ENCODE measurements at regions of chr18 and their contacts with region 1.

Region 1: DNA sequence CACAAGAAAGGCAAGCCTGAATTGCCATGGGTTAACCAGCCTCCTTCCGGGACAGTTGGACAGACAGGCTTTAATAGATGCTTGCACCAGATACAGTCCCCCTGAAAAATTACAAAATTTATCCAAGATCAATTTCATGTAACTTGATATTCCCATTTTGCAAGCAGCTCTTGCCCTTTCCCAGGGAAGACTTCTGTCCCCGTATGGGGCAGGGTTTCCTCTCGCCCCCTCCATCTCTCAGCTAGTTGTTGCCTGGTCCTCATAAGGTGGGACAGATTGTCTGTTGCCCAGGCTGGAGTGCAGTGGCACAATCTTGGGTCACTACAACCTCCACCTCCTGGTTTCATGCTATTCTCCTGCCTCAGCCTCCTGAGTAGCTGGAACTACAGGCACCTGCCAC is 61.2 kb downstream of the TTC39C start:
- DNase-seq: peak; percentile 16
- H3K4me3 Mint-ChIP-seq: peak overlapping the region; percentile 24
- H3K27ac Mint-ChIP-seq: peak overlapping the region; percentile 86
- H3K4me1 Mint-ChIP-seq: peaks cover 19% of the 10 kb centered on the region
- H3K27me3 Mint-ChIP-seq: no peaks in the 10 kb centered on the region
- CTCF ChIP-seq: no peak

Region 2: GRCh38 chr18:24027156-24027827 is 48.4 kb before region 1 on chr18:
- CTCF ChIA-PET with region 1: interaction called, 8 read pairs
- POLR2A ChIA-PET with region 1: interaction called, 4 read pairs
- intact Hi-C with region 1: loop called (anchors 1 kb)
- DNase-seq: peak; percentile 95
- H3K4me3 Mint-ChIP-seq: peak overlapping the region; percentile 57
- H3K27ac Mint-ChIP-seq: peak overlapping the region; percentile 74
- H3K4me1 Mint-ChIP-seq: peaks cover 31% of the 10 kb centered on the region
- H3K27me3 Mint-ChIP-seq: no peaks in the 10 kb centered on the region
- CTCF ChIP-seq: no peak

Region 3: GRCh38 chr18:24086082-24086481 is 10.4 kb after region 1 on chr18:
- CTCF ChIA-PET with region 1: interaction called, 10 read pairs
- POLR2A ChIA-PET with region 1: interaction called, 4 read pairs
- intact Hi-C with region 1: no loop called
- DNase-seq: no peak
- H3K4me3 Mint-ChIP-seq: no peak overlapping the region
- H3K27ac Mint-ChIP-seq: no peak overlapping the region
- H3K4me1 Mint-ChIP-seq: no peaks in the 10 kb centered on the region
- H3K27me3 Mint-ChIP-seq: no peaks in the 10 kb centered on the region
- CTCF ChIP-seq: no peak

Region 4: DNA sequence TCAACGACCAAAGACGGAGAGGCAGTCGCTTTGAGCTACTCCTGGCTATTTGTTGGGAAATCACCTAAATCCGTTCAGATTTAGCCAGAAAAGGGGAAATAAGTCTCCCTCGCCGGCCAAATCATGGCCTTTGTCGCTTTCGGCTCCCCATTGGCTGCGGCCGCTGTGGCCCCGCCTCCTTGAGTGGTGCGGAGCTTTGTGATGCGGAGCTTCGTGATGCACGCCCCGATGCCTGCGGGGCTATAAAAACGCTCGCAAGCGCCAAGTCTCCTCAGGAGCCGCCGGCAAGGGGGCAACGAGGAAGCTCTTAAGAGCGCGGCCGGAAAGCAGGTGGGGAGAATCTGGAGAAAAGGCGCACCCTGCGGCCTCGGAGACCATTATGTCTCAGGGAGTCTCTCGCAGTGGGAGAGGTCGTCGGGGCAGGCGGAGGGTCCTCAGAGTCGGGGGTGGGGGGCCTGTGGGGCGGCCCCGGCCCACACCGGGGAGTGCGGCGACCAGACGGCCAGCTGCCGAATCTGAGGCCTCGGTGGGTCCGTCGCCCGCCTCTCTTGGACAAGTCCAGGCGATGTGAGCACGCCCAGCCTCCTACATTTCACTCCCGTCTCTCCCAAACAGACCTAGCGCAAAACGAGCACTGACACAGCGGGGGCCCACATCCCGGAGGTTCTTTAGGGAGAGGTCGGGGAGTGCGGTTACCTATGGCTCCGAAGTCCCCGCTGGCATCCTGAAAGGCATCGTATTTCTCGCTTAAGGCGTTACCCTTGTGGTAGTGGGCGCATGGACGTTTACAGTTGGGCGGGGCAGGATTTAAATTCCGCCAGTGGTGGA is 63.3 kb after region 1 on chr18 and contains the start of gene CABYR:
- CTCF ChIA-PET with region 1: no interaction called
- POLR2A ChIA-PET with region 1: interaction called, 3 read pairs
- intact Hi-C with region 1: loop called (anchors 2 kb)
- DNase-seq: peak; percentile 87
- H3K4me3 Mint-ChIP-seq: peak within 1 kb of the TSS; percentile 88
- H3K27ac Mint-ChIP-seq: peak within 1 kb of the TSS; percentile 89
- H3K4me1 Mint-ChIP-seq: peaks cover 6% of the 10 kb centered on the region
- H3K27me3 Mint-ChIP-seq: no peaks in the 10 kb centered on the region
- CTCF ChIP-seq: no peak
- total RNA-seq, gene CABYR: 3.0 TPM in 2 replicates

Measured in MCF 10A (cell line).